ENCODE measurements at regions of chr18 and their contacts with region 1.

Region 1: GRCh38 chr18:76991021-76991688 is 141.4 kb downstream of the MBP start:
- DNase-seq: no peak
- CTCF ChIP-seq: no peak

Region 2: DNA sequence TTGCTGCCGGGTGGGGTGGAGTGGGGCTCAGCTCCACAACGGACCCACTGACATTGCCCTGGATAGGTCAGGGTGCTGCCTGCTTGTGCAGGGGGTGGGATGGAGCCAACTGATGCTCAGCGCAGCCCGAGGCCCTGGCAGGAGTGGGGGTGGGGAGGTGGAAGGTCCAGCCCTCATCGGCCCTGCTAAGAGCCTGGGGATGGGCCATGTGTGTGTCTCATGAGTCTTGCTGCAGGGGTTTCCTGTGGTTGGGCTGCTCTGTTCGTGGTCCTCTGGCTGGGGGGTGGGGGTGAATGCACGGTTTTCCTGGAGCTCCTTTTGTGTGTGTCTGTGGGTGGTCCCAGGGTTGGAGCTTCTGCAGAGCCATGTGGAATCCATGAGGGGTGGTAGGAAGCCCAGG is 219.1 kb after region 1 on chr18:
- in situ Hi-C with region 1: loop called (anchors 10 kb)
- DNase-seq: no peak
- CTCF ChIP-seq: no peak